ENCODE measurements at regions of chr15 and their contacts with region 1.

Region 1: DNA sequence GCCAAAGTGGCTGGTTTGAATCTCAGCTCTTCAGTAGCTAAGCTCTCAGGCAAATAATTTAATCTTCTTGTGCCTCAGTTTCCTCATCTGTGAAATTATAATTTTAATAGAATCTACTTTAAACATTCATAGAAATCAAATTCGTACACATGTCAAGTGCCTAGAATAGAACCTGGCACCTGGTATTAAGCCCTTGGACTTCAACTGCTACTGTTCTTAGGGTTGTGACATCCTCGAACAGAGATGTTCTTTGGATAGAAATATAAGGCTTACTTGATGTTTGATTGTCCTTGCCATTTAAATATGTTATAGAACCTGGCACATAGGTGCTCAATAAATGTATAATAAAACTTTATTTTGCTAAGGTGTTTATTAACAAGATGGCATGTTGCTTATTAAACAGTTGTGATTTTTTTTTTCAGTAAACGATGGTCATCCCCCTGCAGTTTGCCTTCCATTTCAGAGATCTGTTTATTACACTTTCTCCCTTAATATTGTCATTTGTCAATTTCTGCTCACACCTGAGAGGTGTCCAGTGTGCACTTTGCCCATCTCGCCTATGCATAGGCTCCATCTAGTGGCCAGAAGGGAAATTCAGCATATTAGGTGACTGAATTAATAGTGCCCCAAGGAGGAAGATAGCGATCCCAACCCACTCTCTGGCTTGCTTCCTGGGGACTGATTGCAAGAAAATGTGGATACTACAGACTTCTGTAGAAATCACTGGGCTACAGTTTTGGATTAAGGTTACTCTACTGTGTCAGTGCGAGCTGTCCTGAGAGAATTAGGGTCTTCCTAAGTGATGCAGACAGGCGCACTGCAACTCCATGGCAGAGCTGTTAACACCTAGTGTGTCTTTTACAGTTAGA is 10.7 kb downstream of the IGF1R start:
- DNase-seq: peak; percentile 54
- H3K4me3 ChIP-seq: no peak overlapping the region
- H3K27ac ChIP-seq: no peak overlapping the region
- H3K4me1 ChIP-seq: peaks cover 3% of the 10 kb centered on the region
- H3K27me3 ChIP-seq: no peaks in the 10 kb centered on the region
- CTCF ChIP-seq: peak; percentile 81

Region 2: GRCh38 chr15:98518823-98519561 is 140.1 kb before region 1 on chr15:
- intact Hi-C with region 1: loop called (anchors 2 kb)
- DNase-seq: peak; percentile 46
- H3K4me3 ChIP-seq: no peak overlapping the region
- H3K27ac ChIP-seq: no peak overlapping the region
- H3K4me1 ChIP-seq: no peaks in the 10 kb centered on the region
- H3K27me3 ChIP-seq: no peaks in the 10 kb centered on the region
- CTCF ChIP-seq: peak; percentile 80

Region 3: DNA sequence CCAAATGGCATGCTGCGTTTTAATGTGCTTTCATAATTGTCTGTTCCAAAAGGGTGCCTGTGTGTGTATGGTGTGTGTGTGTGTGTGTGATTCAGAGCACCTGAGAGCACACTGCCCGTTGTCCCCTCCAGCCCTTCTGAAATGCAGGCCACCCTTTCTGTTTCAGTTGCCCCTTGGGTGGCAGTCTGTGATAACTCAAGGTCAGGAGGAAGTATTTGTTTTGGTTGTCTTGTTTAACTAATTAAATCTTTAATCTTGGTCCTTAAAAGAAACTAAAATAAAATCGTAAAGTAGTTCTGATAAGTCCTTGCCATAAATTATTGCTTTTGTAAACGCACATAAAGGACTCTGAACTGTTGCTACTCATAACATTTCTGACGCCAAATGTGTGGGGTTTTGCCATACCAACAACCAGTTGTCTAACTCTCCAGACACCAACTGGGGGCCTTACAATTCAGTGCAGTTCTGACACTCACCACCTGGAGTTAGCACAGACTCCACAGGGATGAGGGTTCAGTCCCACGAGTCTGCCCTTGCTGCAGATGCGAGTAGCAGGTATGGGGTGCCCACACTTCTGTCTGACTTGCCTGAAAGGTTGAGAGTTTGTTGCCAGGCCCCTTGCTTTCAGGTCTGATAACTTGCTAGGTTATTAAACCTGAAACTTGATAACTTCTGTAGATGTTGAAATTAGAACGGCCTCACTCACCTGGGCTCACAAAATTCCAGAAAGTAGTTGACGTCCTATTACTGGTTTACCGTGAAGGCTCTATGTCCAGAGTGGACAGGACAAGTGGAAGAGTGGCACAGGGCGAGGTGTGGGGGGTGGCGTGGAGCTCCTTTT is 146.6 kb after region 1 on chr15:
- intact Hi-C with region 1: no loop called
- DNase-seq: no peak
- H3K4me3 ChIP-seq: no peak overlapping the region
- H3K27ac ChIP-seq: peak overlapping the region; percentile 37
- H3K4me1 ChIP-seq: peaks cover 12% of the 10 kb centered on the region
- H3K27me3 ChIP-seq: no peaks in the 10 kb centered on the region
- CTCF ChIP-seq: peak; percentile 27

Region 4: GRCh38 chr15:99068186-99068585 is 409.1 kb after region 1 on chr15:
- intact Hi-C with region 1: loop called (anchors 10 kb)
- DNase-seq: no peak
- H3K4me3 ChIP-seq: no peak overlapping the region
- H3K27ac ChIP-seq: no peak overlapping the region
- H3K4me1 ChIP-seq: no peaks in the 10 kb centered on the region
- H3K27me3 ChIP-seq: no peaks in the 10 kb centered on the region
- CTCF ChIP-seq: no peak

Measured in colonic mucosa (tissue), 4 donors.